ENCODE measurements at regions of chr2 and their contacts with region 1.

Region 1: GRCh38 chr2:170770606-170771420 is 635 bp downstream of the ERICH2 start:
- DNase-seq: peak; percentile 84
- H3K4me3 ChIP-seq: peak overlapping the region; percentile 91 to 99 (median 95)
- H3K27ac ChIP-seq: peak overlapping the region; percentile 94
- H3K4me1 ChIP-seq: peaks cover 7% of the 10 kb centered on the region
- H3K27me3 ChIP-seq: no peaks in the 10 kb centered on the region
- CTCF ChIP-seq: no peak

Region 2: DNA sequence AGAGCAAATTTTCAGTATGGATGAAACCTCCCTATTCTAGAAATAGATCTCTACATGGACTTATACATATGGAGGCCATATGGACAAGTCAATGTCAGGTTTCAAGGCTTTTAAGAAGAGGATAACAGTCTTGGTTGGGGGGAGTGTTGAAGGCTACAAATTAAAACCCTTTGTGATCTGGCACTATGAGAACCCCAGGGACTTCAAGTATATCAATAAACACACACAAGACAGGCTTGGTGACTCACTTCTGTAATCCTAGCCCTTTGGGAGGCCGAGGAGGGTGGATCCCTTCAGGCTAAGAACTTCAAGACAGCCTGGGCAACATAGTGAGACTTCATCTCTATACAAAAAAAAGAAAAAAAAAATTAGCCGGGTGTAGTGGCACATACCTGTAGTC is 182.9 kb before region 1 on chr2:
- CTCF ChIA-PET with region 1: no interaction called
- dilution Hi-C with region 1: no loop called
- in situ Hi-C with region 1: no loop called
- intact Hi-C with region 1: no loop called
- DNase-seq: peak; percentile 39
- H3K4me3 ChIP-seq: no peak overlapping the region
- H3K27ac ChIP-seq: no peak overlapping the region
- H3K4me1 ChIP-seq: peaks cover 11% of the 10 kb centered on the region
- H3K27me3 ChIP-seq: no peaks in the 10 kb centered on the region
- CTCF ChIP-seq: no peak

Region 3: GRCh38 chr2:170739048-170739447 is 31.8 kb before region 1 on chr2:
- CTCF ChIA-PET with region 1: interaction called, 5 read pairs
- dilution Hi-C with region 1: no loop called
- in situ Hi-C with region 1: no loop called
- intact Hi-C with region 1: loop called (anchors 1 kb)
- DNase-seq: peak; percentile 96
- H3K4me3 ChIP-seq: no peak overlapping the region
- H3K27ac ChIP-seq: peak overlapping the region; percentile 98
- H3K4me1 ChIP-seq: peaks cover 31% of the 10 kb centered on the region
- H3K27me3 ChIP-seq: no peaks in the 10 kb centered on the region
- CTCF ChIP-seq: no peak